ENCODE measurements at regions of chr7 and their contacts with region 1.

Region 1: DNA sequence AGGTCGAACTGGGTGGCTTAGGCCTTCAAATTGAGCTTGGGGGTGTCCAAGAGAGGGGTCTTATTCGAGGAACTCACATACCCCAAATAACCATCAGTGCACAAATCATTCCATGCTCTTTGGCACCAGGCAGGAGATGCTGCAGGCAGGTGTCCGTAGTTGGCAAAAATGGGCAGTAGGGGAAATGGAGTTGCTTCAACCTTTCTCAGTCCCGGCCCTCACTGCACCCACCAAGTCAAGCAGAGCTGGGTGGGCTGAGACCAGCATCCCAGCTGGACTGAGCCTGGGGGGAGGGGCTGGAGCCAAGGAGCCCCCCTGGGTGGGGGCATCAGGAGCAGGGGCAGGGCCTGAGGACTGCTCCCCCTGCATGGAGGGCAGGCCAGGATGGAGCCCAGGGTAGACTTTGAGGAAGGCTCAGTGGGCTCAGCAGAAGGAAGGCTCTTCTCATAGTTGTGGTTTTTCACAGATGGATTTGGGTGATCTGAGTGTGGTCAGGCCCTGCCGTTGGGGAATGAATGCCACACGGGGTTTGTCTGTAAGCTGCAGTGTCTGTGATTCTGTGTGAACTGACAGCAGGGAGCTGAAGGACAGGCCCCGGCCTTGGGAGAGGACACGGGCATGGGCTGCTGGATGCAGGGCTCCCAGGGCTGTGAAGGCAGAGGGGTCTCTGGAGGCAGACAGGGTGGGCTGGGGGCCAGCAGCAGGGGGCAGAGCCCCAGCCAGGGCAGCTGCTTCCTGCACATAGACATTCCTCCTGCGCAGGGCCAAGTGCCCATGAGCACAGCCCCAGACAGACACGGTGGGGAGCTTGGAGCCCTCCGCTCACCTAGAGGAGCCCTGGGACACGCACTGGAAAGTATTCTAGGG is 144.5 kb downstream of the ADCY1 start:
- DNase-seq: no peak
- CTCF ChIP-seq: no peak

Region 2: GRCh38 chr7:47049234-47049774 is 1330.6 kb after region 1 on chr7:
- CTCF ChIA-PET with region 1: no interaction called
- POLR2A ChIA-PET with region 1: interaction called, 10 read pairs
- DNase-seq: no peak
- CTCF ChIP-seq: no peak